Breast epithelium (tissue), 4 donors: ENCODE measurements at regions of chr14 and their contacts with region 1.

Region 1: GRCh38 chr14:39617537-39617936 is 185.3 kb upstream of the FBXO33 start:
- DNase-seq: no peak
- H3K4me3 ChIP-seq: no peak overlapping the region
- H3K27ac ChIP-seq: no peak overlapping the region
- H3K4me1 ChIP-seq: no peaks in the 10 kb centered on the region
- H3K27me3 ChIP-seq: no peaks in the 10 kb centered on the region
- CTCF ChIP-seq: no peak
- POLR2A ChIP-seq: no peak

Region 2: GRCh38 chr14:39861229-39861600 is 243.7 kb after region 1 on chr14:
- intact Hi-C with region 1: no loop called
- DNase-seq: no peak
- H3K4me3 ChIP-seq: no peak overlapping the region
- H3K27ac ChIP-seq: no peak overlapping the region
- H3K4me1 ChIP-seq: no peaks in the 10 kb centered on the region
- H3K27me3 ChIP-seq: no peaks in the 10 kb centered on the region
- CTCF ChIP-seq: no peak
- POLR2A ChIP-seq: no peak

Region 3: DNA sequence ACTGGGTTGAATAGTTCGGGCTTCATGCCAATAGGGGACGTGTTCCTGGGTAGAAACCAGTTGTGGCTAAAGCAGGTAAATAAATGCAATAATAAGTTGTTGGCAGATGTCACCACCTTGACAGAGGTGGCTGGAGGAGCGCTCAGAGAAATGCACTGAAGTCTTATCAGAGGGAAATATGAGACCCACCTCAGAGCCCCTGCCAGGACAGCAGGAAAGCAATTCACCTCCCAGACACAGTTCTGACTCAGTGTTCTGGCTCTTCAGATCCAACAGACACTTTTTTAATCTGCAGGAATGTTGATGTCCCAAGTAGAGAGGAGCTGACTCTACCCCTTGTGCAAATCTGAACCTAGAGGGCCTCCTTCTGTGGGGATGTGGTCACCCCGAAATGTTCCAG is 501.8 kb after region 1 on chr14:
- intact Hi-C with region 1: loop called (anchors 5 kb)
- DNase-seq: no peak
- H3K4me3 ChIP-seq: no peak overlapping the region
- H3K27ac ChIP-seq: no peak overlapping the region
- H3K4me1 ChIP-seq: no peaks in the 10 kb centered on the region
- H3K27me3 ChIP-seq: no peaks in the 10 kb centered on the region
- CTCF ChIP-seq: no peak
- POLR2A ChIP-seq: no peak